ENCODE measurements at regions of chr11 and their contacts with region 1.

Region 1: DNA sequence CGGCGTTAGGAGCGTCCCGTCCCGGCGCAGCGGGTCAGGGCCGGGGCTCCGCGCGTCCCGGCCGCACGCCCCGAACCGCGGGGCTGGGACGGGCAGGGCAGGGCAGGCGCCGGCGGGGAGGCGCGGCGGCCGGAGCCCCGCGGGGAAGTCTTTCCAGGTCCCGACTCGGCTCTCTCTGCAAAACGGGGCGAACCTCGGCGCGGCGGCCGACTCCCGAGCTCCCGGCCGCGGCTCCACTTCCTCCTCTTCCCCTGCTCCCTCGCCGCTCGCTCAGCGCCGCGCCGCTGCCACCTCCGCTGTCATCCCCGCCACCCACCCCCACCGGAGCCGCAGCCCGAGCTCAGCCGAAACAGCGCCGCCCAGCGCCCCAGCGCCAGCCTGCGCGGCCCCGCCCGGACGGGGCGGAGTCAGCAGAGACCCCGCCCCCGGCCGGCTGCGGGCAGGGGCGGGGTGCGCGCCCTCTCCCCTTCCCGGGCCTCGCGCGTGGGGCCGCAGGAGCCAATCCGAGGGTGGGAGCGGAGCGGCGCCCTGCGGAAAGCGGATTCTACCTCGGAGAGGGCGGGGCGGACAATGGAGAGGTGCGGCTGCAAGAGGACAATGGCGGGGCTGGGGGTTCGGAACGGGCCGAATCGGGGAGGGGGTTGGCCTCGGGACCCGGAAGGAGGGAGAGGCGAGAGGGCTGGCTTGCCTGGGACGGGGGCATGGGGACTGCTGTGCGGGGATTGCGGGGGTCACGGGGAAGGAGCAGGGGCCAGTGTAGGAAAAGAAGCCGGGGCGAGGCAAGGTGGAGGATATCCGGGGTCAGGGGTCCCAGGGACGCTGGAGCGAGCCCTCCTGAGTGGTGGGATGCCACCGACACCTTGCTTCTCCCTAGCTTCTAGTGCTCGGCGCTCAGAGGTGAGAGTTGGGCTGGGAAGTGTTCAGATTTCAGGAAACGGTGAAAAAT is at the start of gene GDPD5:
- DNase-seq: peak; percentile 88
- H3K4me3 Mint-ChIP-seq: peak within 1 kb of the TSS; percentile 82
- H3K27ac Mint-ChIP-seq: peak within 1 kb of the TSS; percentile 10
- H3K4me1 Mint-ChIP-seq: peaks cover 17% of the 10 kb centered on the region
- H3K27me3 Mint-ChIP-seq: peaks cover 27% of the 10 kb centered on the region
- total RNA-seq, gene GDPD5: 9.7 and 13.5 TPM in 2 replicates

Region 2: DNA sequence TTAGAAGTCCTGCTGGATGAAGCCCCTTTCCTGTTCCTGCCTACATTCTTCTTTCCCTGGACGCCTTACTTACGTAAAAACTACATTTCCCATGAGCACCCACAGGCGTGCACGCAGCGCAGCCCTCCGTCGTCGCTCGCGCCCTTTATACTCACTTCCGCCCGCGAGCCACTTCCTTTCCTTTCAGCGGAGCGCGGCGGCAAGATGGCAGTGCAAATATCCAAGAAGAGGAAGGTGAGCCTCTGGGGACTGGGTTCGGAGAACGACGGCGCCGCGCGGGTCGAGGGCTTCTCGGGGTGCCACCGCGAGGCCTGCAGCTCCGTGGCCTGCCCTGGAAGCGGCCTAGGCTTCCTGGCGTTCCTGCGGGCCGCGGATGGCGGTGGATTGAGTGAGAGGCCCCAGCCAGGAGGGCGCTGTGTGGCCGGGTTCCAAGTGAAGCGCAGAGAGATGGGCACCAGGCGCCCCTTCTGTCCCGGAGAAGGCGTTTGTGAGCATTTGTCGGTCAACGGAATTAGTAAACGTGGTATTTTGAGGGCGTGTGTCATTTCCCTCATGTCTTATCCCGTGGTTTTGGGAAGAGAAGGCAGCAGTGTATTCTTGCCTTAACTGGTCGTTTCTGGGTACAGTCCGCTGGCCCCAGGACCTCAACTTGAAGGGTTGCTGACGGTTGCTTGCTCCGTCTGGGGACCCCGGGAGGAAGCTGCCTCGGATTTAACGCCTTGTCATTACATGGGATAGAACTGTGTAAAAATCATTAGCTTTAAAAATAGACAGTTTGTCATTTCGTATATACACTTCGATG is 126.3 kb before region 1 on chr11 and contains the start of gene RPS3:
- intact Hi-C with region 1: loop called (anchors 1 kb)
- DNase-seq: peak; percentile 86
- H3K4me3 Mint-ChIP-seq: peak within 1 kb of the TSS; percentile 99
- H3K27ac Mint-ChIP-seq: peak within 1 kb of the TSS; percentile 90
- H3K4me1 Mint-ChIP-seq: peaks cover 51% of the 10 kb centered on the region
- H3K27me3 Mint-ChIP-seq: peaks cover 3% of the 10 kb centered on the region
- total RNA-seq, gene RPS3: 2,822 and 2,924 TPM in 2 replicates

Region 3: GRCh38 chr11:75474878-75475766 is 50.7 kb before region 1 on chr11:
- intact Hi-C with region 1: loop called (anchors 2 kb)
- DNase-seq: peak; percentile 58
- H3K4me3 Mint-ChIP-seq: no peak overlapping the region
- H3K27ac Mint-ChIP-seq: peak overlapping the region; percentile 70
- H3K4me1 Mint-ChIP-seq: peaks cover 17% of the 10 kb centered on the region
- H3K27me3 Mint-ChIP-seq: no peaks in the 10 kb centered on the region

Region 4: DNA sequence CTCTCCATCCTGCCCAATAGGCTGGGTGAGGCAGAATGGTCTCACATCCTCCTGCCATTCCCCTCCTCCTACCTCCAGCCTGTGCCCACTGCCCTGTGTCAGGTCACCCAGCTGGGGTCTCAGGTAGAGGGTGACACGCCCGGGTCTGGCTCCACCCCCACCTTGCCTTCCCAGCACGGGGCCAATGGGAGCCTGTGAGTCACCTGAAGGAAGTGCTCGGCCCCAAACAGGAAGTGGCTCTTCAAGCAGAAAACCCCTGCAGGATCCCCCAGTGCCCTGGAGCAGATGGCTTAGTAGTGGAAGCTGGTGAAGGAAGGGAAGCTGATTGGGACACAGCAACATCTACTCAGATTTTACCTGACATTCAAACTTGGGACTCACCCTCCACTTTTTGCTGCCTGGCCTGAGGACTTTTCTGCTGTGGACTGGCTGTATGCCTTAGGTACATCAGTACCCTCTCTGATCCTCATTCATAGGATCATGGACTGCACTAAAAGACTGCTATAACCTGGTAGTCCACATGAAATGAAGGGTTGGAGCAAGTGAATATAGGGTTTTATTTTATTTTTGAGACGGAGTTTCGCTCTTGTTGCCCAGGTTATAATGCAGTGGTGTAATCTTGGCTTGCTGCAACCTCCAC is 33.6 kb before region 1 on chr11:
- intact Hi-C with region 1: loop called (anchors 2 kb)
- DNase-seq: peak; percentile 49
- H3K4me3 Mint-ChIP-seq: peak overlapping the region; percentile 24
- H3K27ac Mint-ChIP-seq: peak overlapping the region; percentile 82
- H3K4me1 Mint-ChIP-seq: peaks cover 24% of the 10 kb centered on the region
- H3K27me3 Mint-ChIP-seq: no peaks in the 10 kb centered on the region

Region 5: GRCh38 chr11:75562048-75562835 is 36.4 kb after region 1 on chr11 and contains the start of gene SERPINH1:
- intact Hi-C with region 1: loop called (anchors 1 kb)
- DNase-seq: peak; percentile 61
- H3K4me3 Mint-ChIP-seq: peak within 1 kb of the TSS; percentile 92
- H3K27ac Mint-ChIP-seq: peak within 1 kb of the TSS; percentile 90
- H3K4me1 Mint-ChIP-seq: peaks cover 15% of the 10 kb centered on the region
- H3K27me3 Mint-ChIP-seq: peaks cover 4% of the 10 kb centered on the region
- total RNA-seq, gene SERPINH1: 24.1 and 25.3 TPM in 2 replicates

Region 6: DNA sequence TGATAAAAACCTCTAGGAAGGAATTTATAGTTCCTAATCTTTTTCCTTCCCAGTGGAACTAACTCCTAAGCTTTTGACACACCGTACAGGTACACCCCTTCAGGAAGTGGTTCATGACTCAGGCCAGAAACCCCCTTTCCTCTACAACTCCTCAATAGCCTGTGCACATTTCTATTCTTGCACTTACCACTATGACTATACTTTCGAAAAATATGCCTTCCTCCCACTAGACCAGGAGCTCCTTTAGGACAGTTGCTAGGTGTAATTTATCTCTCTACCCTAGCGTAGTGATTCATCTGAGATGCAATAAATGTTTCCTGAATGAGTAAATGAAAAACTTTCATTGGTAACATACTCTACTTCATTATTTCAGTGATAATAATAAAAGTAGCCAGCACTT is 128.4 kb after region 1 on chr11:
- intact Hi-C with region 1: no loop called
- DNase-seq: no peak
- H3K4me3 Mint-ChIP-seq: no peak overlapping the region
- H3K27ac Mint-ChIP-seq: no peak overlapping the region
- H3K4me1 Mint-ChIP-seq: peaks cover 15% of the 10 kb centered on the region
- H3K27me3 Mint-ChIP-seq: peaks cover 24% of the 10 kb centered on the region

Region 7: GRCh38 chr11:76347466-76347865 is 821.6 kb after region 1 on chr11:
- intact Hi-C with region 1: no loop called
- DNase-seq: no peak
- H3K4me3 Mint-ChIP-seq: no peak overlapping the region
- H3K27ac Mint-ChIP-seq: no peak overlapping the region
- H3K4me1 Mint-ChIP-seq: no peaks in the 10 kb centered on the region
- H3K27me3 Mint-ChIP-seq: no peaks in the 10 kb centered on the region